ENCODE measurements at regions of chr6 and their contacts with region 1.

Region 1: DNA sequence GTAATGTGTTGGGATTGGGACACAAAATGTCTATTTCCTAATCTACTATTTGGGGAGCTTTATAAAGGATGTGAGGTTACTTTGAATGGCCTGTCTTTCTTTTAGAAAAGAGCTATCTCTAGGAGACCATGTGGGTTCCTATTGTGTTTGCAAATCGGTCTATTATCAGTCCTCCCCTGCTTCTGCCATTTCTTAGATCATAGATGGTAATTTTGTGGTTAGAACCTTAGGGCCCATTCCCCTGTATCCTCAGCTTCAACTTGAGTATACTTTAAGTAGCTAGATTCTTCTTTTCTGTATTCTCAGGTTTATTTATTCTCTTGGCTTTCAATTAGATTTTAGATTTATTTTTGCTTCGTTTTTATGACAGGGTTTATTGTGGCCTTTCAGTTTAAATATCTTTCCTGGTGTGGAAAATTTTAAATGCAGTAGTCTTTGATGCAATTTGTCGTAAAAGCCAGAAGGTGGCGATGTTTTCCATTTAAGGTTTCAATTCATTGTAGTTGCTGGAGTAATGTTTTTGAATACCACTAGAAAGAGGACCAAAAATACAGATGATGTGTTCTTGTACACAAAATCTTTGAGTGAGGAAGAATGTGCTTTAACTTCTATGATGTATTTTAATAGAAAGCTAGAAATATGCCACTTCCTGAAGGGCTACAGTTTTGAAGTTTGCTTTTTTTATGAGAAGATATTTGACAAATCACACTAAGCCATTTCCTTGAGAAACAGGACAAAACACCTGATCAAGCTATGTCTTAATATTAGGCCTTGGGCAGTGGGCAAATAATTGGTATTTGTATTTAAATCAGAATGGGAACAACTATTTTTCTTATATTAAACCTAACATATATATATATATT is 20.3 kb downstream of the TBPL1 start:
- DNase-seq: no peak
- H3K4me3 ChIP-seq: no peak overlapping the region
- CTCF ChIP-seq: no peak
- POLR2A ChIP-seq: no peak

Region 2: DNA sequence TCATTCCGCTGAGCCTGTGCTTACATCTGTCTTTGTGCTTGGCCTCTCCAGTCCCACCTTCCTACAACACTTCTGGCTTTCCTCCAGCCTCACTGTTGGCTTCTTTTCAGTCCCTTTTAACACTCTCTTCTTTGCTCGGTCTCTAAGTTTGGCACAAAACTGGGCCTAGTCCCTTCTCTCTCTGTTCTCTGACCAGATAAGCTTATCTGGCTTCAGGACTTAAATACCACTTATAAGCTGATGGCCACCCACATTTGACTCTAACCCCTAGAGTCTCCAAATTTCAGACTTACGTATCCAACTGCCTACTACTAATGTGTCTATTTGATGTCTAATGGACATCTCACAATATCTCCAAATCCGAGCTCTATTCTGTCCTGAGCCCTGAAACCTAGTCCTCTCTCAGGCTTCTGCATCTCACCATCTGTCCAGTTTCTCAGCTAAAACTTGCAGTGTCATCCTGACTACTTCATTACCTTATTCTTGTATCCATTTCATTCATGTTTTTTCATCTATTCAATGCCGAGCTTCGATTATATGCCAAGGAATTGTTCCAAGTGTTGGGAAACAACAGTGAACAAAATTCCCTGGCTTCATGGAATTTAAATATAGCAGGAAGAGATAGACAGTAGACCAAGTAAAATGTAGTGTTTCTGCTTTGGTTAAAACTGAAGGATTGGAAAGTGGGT is 19.8 kb after region 1 on chr6:
- intact Hi-C with region 1: no loop called
- DNase-seq: no peak
- H3K4me3 ChIP-seq: no peak overlapping the region
- CTCF ChIP-seq: no peak
- POLR2A ChIP-seq: no peak

Region 3: DNA sequence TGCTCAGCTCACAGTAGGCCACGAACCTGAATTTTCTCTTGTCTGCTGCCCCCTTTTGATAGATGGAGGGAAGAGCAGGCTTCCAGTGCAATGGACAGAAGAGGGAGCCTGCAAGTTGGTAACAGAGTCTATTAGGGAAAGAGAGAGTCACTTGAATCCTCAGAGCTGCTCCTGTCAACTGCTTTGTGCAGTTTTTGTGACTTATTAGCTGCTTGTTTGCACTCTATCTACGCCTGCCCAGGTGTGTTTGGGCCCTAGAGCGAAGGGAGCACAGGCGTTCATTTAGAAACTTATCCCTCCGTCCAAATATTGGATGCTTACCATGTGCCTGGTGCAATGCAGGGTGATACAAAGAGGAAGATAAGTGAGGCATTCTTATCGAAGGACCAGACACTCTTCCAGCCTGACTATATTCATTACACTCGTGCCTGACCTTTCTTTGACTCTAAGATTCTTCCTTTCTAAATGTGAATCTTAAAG is 90.7 kb after region 1 on chr6:
- intact Hi-C with region 1: loop called (anchors 5 kb)
- DNase-seq: peak in 1 of 2 donors; percentile 68
- H3K4me3 ChIP-seq: no peak overlapping the region
- CTCF ChIP-seq: no peak
- POLR2A ChIP-seq: no peak

Measured in lower leg skin (tissue), 4 donors.